ENCODE measurements at regions of chr2 and their contacts with region 1.

Region 1: DNA sequence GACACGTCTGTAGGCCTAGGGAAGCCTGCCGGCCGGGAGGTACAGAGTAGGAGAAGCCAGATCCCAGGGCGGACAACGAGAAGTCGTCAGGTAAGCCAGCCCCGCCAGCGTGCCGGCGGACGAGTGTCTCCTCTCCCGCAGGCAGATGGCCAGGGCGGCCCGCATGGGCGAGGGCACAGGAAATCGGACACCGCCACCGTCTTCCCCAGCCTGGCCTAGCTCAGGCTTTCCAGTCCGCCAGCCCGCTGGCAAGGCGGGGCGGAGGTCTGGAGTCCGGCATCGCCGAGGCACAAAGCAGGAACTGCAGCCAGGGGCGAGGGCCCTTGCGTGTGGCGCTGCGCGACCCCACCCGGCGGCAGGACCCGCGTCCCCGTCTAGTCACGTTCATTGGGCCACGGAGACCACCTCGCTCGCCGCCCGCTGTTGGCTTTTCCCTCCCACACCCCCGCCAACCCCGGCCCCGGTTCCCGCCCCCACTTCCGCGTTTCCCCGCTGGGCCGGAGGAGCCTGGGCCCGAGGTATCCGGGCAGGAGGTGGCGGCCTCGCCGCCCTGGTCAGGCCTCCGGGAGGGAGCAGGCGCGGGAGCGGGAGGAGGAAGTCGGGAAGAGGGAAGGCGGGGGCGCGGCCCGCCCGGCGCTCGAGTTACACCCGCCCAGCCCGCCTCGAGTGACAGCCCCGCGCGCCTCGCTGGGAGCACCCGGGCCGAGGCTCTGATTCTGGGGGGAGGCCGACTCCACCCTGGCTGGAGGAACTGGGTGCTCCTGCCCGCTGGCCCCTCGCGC is at the start of gene GPD2:
- DNase-seq: peak; percentile 94 to 97 (median 95)
- ATAC-seq: peak; percentile 97 to 99 (median 99)
- H3K4me3 ChIP-seq: peak within 1 kb of the TSS; percentile 62 to 92 (median 74)
- H3K27ac ChIP-seq: peak within 1 kb of the TSS; percentile 94 to 100 (median 98)
- H3K4me1 ChIP-seq: peaks cover 0 to 37% (median 20%) of the 10 kb centered on the region in 12 donors
- H3K27me3 ChIP-seq: no peaks in the 10 kb centered on the region
- CTCF ChIP-seq: peak in 5 of 12 donors; percentile 7 to 25 (median 18)
- POLR2A ChIP-seq: peak in 1 of 2 donors; percentile 59
- total RNA-seq, gene GPD2: 12.9 to 24.8 (median 14.4) TPM

Region 2: DNA sequence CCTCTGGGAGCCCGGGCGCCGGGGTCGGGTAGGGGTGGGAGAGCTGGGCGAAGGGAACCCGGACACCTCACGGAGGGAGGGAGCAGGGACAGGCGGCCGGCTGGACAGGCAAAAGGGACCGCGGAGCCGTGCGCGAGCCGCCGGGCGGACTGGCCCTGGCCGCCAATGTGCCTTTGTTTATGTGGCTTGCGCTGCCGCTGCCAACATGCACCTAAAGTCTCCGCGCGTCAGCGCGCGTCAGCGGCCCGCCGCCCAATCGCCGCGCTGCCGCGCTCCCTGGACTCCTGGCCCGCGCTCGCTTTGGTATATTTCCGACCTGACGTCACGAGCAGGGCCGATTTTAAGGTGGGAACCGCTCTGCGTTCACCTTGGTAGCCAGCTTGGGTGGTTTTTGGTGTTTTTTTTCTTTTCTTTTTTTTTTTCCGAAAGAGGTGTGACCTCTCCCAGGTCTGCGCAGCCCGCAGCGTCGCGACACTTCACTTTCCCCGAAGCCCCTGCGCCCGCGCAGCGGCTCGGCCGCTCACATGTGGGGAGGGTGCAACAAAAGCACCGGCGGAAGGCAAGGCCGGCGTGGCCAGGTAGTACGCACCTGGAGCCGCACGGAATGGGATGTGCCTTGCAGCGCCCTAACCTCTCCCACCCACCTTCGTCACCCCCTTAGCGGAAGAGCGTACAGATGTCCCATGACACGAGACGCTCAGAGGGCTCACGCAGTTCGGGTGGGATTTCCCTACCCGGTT is 103.2 kb before region 1 on chr2 and contains the start of gene NR4A2:
- intact Hi-C with region 1: loop called in 5 of 10 experiments (anchors 1 to 5 kb)
- DNase-seq: peak; percentile 91 to 93 (median 91)
- ATAC-seq: peak; percentile 62 to 81 (median 74)
- H3K4me3 ChIP-seq: peak within 1 kb of the TSS; percentile 44 to 87 (median 80)
- H3K27ac ChIP-seq: peak within 1 kb of the TSS; percentile 97 to 100 (median 99)
- H3K4me1 ChIP-seq: peaks cover 0 to 34% (median 7%) of the 10 kb centered on the region in 12 donors
- H3K27me3 ChIP-seq: peaks cover 0 to 29% (median 13%) of the 10 kb centered on the region in 9 donors
- CTCF ChIP-seq: no peak
- POLR2A ChIP-seq: peak; percentile 37 to 93
- total RNA-seq, gene NR4A2: 0.63 to 14.2 (median 1.1) TPM

Region 3: DNA sequence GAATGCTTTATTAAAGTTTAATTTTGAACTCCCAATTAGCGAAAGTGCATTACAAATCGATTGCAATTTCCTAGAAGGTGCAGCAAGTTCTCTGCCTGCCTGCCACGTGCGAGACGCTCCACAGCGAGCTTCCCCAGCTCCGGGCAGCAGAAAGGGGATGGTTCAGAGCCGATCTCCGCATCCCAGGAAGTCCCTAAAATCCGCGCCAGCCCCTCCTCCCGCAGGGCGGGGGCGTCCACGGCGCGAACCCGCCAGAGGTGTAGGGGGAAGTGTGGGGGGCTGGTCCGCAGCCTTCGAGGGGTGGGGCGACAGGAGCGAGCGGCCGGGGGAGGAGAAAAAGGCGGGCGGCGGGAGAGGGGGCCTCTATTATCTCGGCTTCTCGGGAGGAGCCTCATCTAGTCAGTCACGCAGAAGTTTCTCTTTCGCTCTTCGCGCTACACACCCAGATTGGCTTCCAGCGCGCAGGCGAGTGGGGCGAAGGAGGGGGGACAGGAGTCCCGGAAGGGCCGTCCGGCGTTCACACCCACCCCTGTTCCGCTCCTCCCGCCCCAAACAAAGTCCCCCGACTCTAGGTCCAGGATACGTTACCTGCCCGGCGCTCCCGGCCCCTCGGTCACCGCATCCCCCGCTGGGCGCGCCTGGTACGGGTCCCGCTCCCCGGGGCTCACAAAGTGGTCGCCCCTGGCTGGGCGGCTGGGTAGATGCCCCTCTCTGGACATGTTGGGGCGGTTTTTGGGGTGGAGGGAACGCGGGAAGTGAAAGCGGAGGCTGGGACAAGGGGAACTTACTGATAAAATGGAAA is 94.3 kb before region 1 on chr2:
- intact Hi-C with region 1: loop called in 7 of 10 experiments (anchors 2 to 5 kb)
- DNase-seq: peak; percentile 93 to 95 (median 94)
- ATAC-seq: peak; percentile 88 to 91 (median 90)
- H3K4me3 ChIP-seq: peak overlapping the region; percentile 75 to 96 (median 90)
- H3K27ac ChIP-seq: peak overlapping the region; percentile 99 to 100 (median 100)
- H3K4me1 ChIP-seq: peaks cover 0 to 36% (median 16%) of the 10 kb centered on the region in 12 donors
- H3K27me3 ChIP-seq: no peaks in the 10 kb centered on the region
- CTCF ChIP-seq: no peak
- POLR2A ChIP-seq: peak in 1 of 2 donors; percentile 73

Region 4: DNA sequence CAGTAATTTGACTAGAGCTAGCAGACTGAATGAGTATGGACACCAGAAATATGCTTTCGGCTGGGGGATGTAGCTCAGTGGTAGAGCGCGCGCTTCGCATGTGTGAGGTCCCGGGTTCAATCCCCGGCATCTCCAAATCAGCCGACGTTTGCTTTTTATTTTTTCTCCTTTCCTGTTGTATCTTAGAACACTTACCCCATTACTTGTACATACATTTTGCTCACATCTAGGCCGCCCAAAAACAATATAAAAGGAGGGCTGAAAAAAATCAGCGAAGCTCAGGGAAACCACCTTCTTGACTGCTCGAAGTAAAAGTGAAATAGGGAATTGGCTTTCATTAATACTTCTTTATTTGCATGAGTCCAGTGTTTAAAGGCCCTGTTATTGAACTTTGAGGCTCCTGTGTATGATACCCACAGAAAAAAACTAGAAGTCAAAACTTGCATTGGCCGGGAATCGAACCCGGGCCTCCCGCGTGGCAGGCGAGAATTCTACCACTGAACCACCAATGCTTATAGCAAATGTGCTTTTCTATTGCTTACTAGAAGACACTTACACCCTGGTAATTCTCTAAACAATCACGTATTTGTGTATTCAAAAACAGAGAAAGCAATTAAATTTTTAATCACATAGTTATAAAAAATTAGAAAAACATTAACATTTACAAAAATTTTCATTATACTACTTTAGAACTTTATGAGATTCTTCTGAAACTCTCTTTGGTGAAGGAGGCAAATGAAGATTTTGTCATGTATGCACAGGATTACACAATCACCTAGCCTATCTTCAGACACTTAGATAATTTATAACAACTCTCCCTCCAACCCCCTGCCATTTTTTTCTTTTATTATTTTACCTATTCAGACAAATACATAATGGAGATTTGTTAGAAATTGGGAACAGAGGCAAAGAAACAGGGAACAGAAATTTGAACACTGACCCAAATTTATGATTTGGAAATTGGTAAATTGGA is 34.9 kb before region 1 on chr2:
- intact Hi-C with region 1: loop called in 7 of 10 experiments (anchors 1 to 5 kb)
- DNase-seq: peak; percentile 55 to 78 (median 72)
- ATAC-seq: peak; percentile 85 to 92 (median 90)
- H3K4me3 ChIP-seq: peak overlapping the region; percentile 66 to 93 (median 76)
- H3K27ac ChIP-seq: peak overlapping the region; percentile 80 to 97 (median 92)
- H3K4me1 ChIP-seq: peaks cover 0 to 25% (median 5%) of the 10 kb centered on the region in 12 donors
- H3K27me3 ChIP-seq: no peaks in the 10 kb centered on the region
- CTCF ChIP-seq: peak in 1 of 12 donors; percentile 1
- POLR2A ChIP-seq: no peak

Region 5: GRCh38 chr2:156466739-156467405 is 31.0 kb after region 1 on chr2:
- intact Hi-C with region 1: loop called in 1 of 10 experiments (anchors 2 kb)
- DNase-seq: peak in 4 of 5 donors; percentile 52 to 75 (median 70)
- ATAC-seq: peak; percentile 92 to 95 (median 94)
- H3K4me3 ChIP-seq: peak overlapping the region in 9 of 12 donors; percentile 19 to 42 (median 29)
- H3K27ac ChIP-seq: peak overlapping the region in 11 of 12 donors; percentile 45 to 82 (median 63)
- H3K4me1 ChIP-seq: peaks cover 2 to 73% (median 37%) of the 10 kb centered on the region in 12 donors
- H3K27me3 ChIP-seq: no peaks in the 10 kb centered on the region
- CTCF ChIP-seq: no peak
- POLR2A ChIP-seq: no peak

Region 6: DNA sequence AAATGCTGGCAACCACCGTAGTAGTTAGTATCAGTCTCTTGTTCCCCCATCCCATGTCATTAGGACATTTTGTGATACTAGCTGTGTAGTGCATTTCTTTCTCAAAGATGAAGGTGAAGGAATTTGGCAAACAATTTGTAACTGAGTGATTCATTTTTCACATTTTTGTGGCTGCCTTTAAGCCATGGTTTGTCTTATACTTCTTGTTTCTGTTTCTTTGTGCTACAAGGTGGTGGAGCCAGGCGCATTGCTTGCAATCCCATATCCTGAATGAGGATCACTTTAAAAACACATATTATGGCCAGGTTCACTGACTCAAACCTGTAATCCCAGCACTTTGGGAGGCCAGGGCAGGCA is 40.9 kb after region 1 on chr2:
- intact Hi-C with region 1: loop called in 1 of 10 experiments (anchors 5 kb)
- DNase-seq: no peak
- ATAC-seq: no peak
- H3K4me3 ChIP-seq: no peak overlapping the region
- H3K27ac ChIP-seq: peak overlapping the region in 1 of 12 donors; percentile 33
- H3K4me1 ChIP-seq: peaks cover 0 to 26% (median 10%) of the 10 kb centered on the region in 12 donors
- H3K27me3 ChIP-seq: no peaks in the 10 kb centered on the region
- CTCF ChIP-seq: no peak
- POLR2A ChIP-seq: no peak

Region 7: DNA sequence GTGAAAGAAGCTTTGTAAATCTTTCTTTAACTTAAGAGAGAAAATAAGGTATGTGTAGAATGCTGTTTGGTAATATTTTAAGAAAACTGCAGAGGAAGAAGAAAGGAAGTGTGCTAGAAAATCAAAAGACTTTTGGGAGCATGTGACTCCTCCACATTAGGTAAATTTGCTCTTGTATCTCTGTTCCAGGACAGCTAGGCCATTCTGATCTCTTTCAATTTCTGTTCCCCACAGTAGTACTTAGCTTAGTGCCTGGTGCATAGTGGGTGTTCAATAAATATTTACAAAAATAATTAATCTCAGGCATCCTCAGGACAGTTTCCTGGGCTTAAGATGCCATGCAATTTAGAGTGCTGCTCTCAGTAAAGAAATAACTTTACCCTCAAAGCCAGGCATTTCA is 105.3 kb after region 1 on chr2:
- intact Hi-C with region 1: loop called in 1 of 10 experiments (anchors 10 kb)
- DNase-seq: no peak
- ATAC-seq: no peak
- H3K4me3 ChIP-seq: no peak overlapping the region
- H3K27ac ChIP-seq: peak overlapping the region in 1 of 12 donors; percentile 9
- H3K4me1 ChIP-seq: peaks cover 0 to 3% (median 0%) of the 10 kb centered on the region in 12 donors
- H3K27me3 ChIP-seq: no peaks in the 10 kb centered on the region
- CTCF ChIP-seq: no peak
- POLR2A ChIP-seq: no peak